Sigmoid colon (tissue), 7 donors: ENCODE measurements at regions of chr11 and their contacts with region 1.

Region 1: GRCh38 chr11:61446211-61446651 is 16.3 kb downstream of the SDHAF2 start:
- DNase-seq: peak; percentile 94
- H3K4me3 ChIP-seq: no peak overlapping the region
- H3K27ac ChIP-seq: peak overlapping the region; percentile 71 to 89 (median 80)
- H3K4me1 ChIP-seq: peaks cover 0 to 60% (median 44%) of the 10 kb centered on the region in 4 donors
- H3K27me3 ChIP-seq: no peaks in the 10 kb centered on the region
- CTCF ChIP-seq: peak; percentile 77 to 88 (median 81)
- EP300 ChIP-seq: no peak
- POLR2A ChIP-seq: no peak

Region 2: GRCh38 chr11:61378713-61379313 is 67.4 kb before region 1 on chr11:
- intact Hi-C with region 1: no loop called
- DNase-seq: peak; percentile 81
- H3K4me3 ChIP-seq: no peak overlapping the region
- H3K27ac ChIP-seq: peak overlapping the region; percentile 5 to 69 (median 47)
- H3K4me1 ChIP-seq: no peaks in the 10 kb centered on the region
- H3K27me3 ChIP-seq: no peaks in the 10 kb centered on the region
- CTCF ChIP-seq: no peak
- EP300 ChIP-seq: no peak
- POLR2A ChIP-seq: no peak

Region 3: DNA sequence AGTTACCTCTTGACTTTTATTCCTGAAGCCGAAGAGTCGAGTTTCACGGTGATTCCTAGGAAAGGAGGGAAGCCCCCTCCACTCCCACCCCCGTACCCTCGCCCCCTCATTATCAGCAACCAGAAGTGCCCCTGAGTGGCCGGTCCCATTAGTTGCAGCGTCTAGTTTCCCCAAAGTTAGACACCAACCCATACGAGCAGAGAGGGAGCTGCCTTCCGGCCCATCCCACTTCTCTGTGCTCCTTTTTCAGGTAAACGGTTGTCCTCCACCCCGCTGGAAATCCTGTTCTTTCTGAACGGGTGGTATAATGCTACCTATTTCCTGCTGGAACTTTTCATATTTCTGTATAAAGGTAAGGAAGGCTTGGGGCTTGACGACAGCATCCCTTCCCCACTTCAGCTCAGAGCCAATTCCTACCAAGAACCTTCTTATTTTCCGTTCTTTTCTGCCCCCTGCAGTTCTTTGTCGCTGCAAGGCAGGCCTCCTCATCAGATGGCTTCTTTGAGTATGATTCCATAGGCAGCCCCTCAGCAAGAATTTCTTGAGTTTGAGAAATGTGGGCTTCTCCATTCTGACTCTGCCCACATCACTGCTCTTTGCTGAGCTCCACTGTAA is 53.1 kb before region 1 on chr11:
- intact Hi-C with region 1: no loop called
- DNase-seq: no peak
- H3K4me3 ChIP-seq: peak overlapping the region; percentile 66 to 87 (median 82)
- H3K27ac ChIP-seq: peak overlapping the region; percentile 76 to 84 (median 82)
- H3K4me1 ChIP-seq: peaks cover 0 to 16% (median 16%) of the 10 kb centered on the region in 4 donors
- H3K27me3 ChIP-seq: no peaks in the 10 kb centered on the region
- CTCF ChIP-seq: no peak
- EP300 ChIP-seq: no peak
- POLR2A ChIP-seq: no peak

Region 4: DNA sequence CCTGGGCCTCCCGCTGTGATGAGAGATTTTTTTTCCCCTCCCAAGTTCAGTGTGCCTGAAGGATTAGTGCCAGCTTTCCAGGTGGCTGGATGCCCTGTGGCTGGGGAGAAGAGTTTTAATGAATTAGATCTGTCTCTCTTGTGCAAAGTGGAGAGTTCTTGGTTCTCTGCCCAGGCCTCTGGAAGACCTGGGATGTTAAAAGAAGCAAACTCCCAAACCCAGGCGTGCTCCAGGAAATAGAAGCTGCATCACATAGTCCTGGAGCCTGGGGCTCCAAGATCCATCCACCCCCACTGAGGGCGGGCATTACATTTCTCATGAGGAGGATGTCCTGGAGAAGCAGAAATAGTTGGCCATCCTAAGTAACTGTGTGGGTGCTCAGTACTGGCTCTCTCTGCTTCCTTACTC is 14.2 kb after region 1 on chr11:
- intact Hi-C with region 1: loop called (anchors 1 kb)
- DNase-seq: peak; percentile 91
- H3K4me3 ChIP-seq: no peak overlapping the region
- H3K27ac ChIP-seq: peak overlapping the region in 3 of 4 donors; percentile 59 to 78 (median 70)
- H3K4me1 ChIP-seq: peaks cover 0 to 18% (median 15%) of the 10 kb centered on the region in 4 donors
- H3K27me3 ChIP-seq: no peaks in the 10 kb centered on the region
- CTCF ChIP-seq: no peak
- EP300 ChIP-seq: peak in 1 of 4 donors; percentile 3
- POLR2A ChIP-seq: no peak

Region 5: DNA sequence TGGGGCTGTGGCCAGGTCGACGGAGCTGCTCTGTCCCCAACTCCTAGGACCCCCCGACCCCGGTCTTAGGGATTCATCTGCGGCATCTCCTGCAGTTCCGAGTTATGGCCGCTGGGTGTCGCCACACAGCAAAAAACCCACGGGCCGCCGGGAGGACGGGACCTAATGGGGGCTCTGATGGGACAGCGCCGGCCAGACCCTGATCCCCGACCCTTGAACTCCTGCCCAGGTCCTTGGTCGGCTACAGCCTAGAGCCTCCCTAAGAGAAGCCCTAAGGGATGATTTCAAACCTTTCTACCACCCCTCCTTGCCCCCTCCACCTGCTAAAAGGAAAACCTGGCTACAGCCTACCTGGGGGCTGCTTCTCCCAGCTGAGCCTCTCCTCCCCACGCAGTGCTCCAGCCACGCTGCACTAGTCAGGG is 31.5 kb after region 1 on chr11:
- intact Hi-C with region 1: loop called (anchors 2 kb)
- DNase-seq: peak; percentile 79
- H3K4me3 ChIP-seq: no peak overlapping the region
- H3K27ac ChIP-seq: no peak overlapping the region
- H3K4me1 ChIP-seq: peaks cover 0 to 29% (median 23%) of the 10 kb centered on the region in 4 donors
- H3K27me3 ChIP-seq: peaks cover 0 to 4% (median 0%) of the 10 kb centered on the region in 3 donors
- CTCF ChIP-seq: peak; percentile 81 to 95 (median 92)
- EP300 ChIP-seq: no peak
- POLR2A ChIP-seq: no peak

Region 6: DNA sequence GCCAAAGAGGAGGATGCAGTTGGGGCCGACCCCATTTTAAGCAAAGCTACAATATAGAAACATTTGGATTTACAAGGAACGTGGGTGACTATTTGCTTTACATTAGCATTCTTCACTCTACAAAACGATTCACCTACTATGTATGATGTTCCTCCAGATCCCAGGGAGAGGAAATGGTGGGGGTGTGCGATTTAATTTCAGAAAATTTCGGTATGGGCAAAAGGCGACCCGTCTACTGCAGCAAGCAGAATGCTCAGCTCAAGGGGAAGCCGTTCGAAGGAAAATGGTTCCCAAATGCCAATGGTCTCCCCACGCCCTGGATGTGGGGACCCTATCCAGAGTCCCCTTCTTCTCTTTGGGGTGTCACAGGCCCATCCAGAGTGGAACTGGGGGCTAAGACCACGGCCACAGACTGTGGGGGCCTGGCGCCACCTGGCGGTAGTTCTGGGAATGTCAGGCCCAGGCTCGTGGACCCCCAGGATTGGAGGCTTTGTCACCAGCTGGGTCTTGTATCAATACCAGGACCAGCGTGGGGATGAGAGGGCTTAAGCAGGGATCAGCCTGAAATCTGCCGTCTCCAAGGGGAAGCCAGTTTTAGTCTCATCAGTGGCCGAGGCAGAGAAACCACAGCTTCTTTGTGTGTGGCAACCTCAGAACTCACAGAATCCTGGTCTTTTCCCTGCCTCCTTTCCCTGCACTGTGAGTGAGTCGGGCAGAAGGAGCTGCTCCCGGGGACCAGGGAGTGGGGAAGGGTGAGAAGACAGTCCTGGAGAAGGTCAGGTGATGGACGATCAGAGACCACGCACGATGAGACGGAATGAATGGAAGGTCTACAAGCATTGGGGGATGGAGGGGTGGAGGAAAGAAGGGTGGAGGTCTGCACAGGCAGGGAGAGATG is 70.7 kb after region 1 on chr11:
- intact Hi-C with region 1: loop called (anchors 1 kb)
- DNase-seq: no peak
- H3K4me3 ChIP-seq: peak overlapping the region in 2 of 4 donors; percentile 20 to 28
- H3K27ac ChIP-seq: peak overlapping the region in 2 of 4 donors; percentile 21 to 40
- H3K4me1 ChIP-seq: peaks cover 0 to 13% (median 10%) of the 10 kb centered on the region in 4 donors
- H3K27me3 ChIP-seq: peaks cover 0 to 5% (median 0%) of the 10 kb centered on the region in 3 donors
- CTCF ChIP-seq: peak; percentile 97 to 100 (median 98)
- EP300 ChIP-seq: no peak
- POLR2A ChIP-seq: no peak

Region 7: DNA sequence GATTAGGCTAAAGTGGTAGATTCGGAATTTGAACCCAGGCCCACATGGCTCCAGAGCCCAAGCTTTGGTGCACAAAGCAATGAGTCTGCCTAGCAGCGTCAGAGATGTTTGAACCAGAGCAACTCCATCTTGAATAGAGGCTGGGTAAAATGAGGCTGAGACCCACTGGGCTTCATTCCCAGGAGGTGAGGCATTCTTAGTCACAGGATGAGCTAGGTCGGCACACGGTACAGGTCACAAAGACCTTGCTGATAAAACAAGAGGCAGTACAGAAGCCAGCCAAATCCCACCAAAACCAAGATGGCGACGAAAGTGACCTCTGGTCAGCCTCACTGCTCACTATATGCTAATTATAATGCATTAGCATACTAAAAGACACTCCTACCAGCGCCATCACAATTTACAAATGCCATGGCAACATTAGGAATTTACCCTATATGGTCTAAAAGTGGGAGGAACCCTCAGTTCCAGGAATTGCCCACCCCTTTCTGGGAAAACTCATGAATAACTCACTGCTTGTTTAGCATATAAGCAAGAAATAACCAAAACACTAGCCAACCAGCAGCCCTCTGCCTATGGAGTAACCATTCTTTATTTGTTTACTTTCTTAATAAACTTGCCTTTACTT is 193.7 kb after region 1 on chr11:
- intact Hi-C with region 1: loop called (anchors 5 kb)
- DNase-seq: no peak
- H3K4me3 ChIP-seq: no peak overlapping the region
- H3K27ac ChIP-seq: no peak overlapping the region
- H3K4me1 ChIP-seq: peaks cover 0 to 4% (median 0%) of the 10 kb centered on the region in 4 donors
- H3K27me3 ChIP-seq: peaks cover 0 to 4% (median 3%) of the 10 kb centered on the region in 3 donors
- CTCF ChIP-seq: no peak
- EP300 ChIP-seq: no peak
- POLR2A ChIP-seq: no peak